A673 (cell line): ENCODE measurements at regions of chr15 and their contacts with region 1.

Region 1: DNA sequence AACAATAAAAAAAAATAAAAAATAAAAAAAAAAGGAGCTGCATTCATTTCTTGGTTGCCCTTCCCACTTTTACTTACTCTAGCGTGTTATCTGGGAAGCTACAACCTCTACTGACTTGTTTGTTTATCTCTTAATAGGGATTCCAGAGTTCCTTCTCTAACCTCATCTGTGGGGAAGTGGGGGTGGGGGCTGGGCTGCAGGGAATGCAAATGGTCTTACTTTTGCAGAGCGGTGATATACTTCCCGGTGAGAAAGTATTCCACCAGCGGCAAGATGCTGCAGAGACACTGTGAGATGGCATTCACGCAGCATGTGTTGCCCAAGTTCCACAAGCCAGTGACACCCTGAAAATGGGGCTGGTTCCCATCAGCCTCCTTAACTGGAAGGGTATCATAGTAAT is 2.1 kb downstream of the USP50 start:
- DNase-seq: no peak
- H3K4me3 ChIP-seq: no peak overlapping the region
- H3K27ac ChIP-seq: no peak overlapping the region
- H3K4me1 ChIP-seq: peaks cover 7% of the 10 kb centered on the region
- H3K27me3 ChIP-seq: no peaks in the 10 kb centered on the region
- CTCF ChIP-seq: no peak

Region 2: DNA sequence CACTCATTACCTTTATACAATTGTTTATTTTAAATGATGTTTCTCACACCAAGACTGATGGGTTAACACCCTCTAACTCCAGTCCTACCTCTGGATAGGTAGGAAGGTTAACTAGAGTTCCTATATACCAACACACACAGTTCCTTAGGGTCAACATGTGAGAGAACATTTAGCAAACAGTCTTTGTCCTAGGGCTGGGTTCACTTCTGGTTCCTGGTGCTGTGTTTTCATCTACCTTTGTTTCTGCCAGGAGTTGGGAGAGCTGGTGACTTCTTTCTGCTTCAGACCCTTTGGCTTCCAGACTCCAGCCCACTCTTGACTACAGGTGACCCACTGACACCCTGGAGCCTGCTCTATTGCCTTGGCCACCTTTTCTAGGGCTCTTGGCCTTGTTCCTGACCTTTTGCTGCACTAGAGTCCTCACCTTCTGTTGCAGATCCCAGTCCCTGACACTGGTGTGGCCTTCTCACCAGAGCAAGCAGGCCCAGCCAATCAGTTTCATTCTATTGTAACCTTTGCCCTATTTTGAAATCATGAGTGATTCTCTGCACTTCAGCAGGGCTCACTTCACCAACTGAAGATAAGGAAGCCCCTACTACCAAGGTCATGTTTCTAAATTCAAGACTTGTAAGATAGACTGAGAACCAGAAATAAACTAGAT is 1448.1 kb before region 1 on chr15:
- CTCF ChIA-PET with region 1: interaction called, 12 read pairs
- POLR2A ChIA-PET with region 1: no interaction called
- intact Hi-C with region 1: no loop called
- DNase-seq: no peak
- H3K4me3 ChIP-seq: no peak overlapping the region
- H3K27ac ChIP-seq: no peak overlapping the region
- H3K4me1 ChIP-seq: no peaks in the 10 kb centered on the region
- H3K27me3 ChIP-seq: no peaks in the 10 kb centered on the region
- CTCF ChIP-seq: no peak

Region 3: GRCh38 chr15:50670115-50670514 is 125.7 kb after region 1 on chr15:
- CTCF ChIA-PET with region 1: no interaction called
- POLR2A ChIA-PET with region 1: no interaction called
- intact Hi-C with region 1: no loop called
- DNase-seq: no peak
- H3K4me3 ChIP-seq: no peak overlapping the region
- H3K27ac ChIP-seq: no peak overlapping the region
- H3K4me1 ChIP-seq: no peaks in the 10 kb centered on the region
- H3K27me3 ChIP-seq: no peaks in the 10 kb centered on the region
- CTCF ChIP-seq: no peak

Region 4: GRCh38 chr15:50830477-50831350 is 286.3 kb after region 1 on chr15:
- CTCF ChIA-PET with region 1: no interaction called
- POLR2A ChIA-PET with region 1: no interaction called
- intact Hi-C with region 1: no loop called
- DNase-seq: no peak
- H3K4me3 ChIP-seq: no peak overlapping the region
- H3K27ac ChIP-seq: no peak overlapping the region
- H3K4me1 ChIP-seq: peaks cover 9% of the 10 kb centered on the region
- H3K27me3 ChIP-seq: no peaks in the 10 kb centered on the region
- CTCF ChIP-seq: no peak